OCI-LY7 (cell line): ENCODE measurements at regions of chr6 and their contacts with region 1.

Region 1: DNA sequence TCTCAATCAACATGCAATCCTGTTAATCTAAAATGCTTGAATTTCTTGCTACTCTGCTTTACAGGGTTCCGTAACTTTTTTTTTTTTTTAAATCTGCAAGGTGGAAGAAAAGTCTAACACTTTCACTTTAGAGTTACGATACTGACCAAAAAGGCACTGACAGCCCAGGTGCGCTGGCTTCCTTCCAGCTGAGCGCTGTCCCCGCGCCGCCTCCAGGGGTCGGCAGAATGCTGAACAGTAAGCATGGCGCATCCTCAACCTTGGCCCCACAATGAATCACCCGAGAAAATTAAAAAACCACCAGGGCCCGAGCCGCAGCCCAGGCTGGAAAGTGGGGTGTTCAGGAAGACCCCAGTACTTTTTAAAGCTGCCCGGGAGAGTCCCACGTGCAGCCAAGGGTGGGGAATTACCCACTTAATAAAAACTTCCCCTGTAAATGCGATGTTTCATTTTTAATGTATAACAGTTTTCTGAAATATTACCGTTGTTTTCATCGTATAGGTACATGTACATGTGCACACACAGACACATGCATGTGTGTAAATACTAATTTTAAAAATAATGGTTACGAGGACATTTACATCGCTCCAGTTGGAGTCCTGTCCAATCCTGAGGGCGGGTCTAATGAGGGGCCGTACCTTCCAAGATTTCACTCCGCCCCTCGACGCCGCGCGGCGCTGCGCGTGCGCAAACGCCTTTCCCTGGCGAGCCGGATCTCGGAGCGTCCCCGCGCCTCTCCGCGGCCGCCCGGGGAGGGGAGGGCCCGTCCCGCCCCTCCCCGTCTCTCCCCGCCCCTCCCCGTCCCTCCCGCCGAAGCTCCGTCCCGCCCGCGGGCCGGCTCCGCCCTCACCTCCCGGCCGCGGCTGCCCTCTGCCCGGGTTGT is at the start of gene GINM1:
- DNase-seq: peak; percentile 96
- H3K4me3 ChIP-seq: peak within 1 kb of the TSS; percentile 97
- H3K27ac ChIP-seq: peak within 1 kb of the TSS; percentile 79
- H3K4me1 ChIP-seq: peaks cover 30% of the 10 kb centered on the region
- CTCF ChIP-seq: peak; percentile 94
- total RNA-seq, gene GINM1: 17.2 and 17.6 TPM in 2 replicates

Region 2: DNA sequence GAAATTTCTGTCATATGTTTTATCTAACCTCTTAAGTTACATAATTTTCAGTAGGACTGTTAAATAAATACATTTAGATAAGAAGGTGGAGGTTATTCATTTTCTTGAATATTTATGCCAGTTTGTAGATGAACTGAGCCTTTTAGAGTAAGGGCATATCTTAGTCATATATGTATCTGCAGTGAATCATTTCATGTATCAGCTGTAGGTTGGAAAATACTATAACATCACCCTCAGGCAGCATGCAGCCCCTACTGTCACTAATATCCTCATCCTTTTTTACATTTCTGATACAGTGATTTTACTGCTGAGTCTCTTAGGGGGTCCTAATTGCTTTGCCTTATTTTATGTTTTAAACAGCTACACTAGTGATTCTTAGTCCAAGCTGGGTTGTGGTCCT is 185.2 kb before region 1 on chr6:
- CTCF ChIA-PET with region 1: no interaction called
- POLR2A ChIA-PET with region 1: no interaction called
- intact Hi-C with region 1: no loop called
- DNase-seq: no peak
- H3K4me3 ChIP-seq: no peak overlapping the region
- H3K27ac ChIP-seq: no peak overlapping the region
- H3K4me1 ChIP-seq: no peaks in the 10 kb centered on the region
- CTCF ChIP-seq: no peak

Region 3: DNA sequence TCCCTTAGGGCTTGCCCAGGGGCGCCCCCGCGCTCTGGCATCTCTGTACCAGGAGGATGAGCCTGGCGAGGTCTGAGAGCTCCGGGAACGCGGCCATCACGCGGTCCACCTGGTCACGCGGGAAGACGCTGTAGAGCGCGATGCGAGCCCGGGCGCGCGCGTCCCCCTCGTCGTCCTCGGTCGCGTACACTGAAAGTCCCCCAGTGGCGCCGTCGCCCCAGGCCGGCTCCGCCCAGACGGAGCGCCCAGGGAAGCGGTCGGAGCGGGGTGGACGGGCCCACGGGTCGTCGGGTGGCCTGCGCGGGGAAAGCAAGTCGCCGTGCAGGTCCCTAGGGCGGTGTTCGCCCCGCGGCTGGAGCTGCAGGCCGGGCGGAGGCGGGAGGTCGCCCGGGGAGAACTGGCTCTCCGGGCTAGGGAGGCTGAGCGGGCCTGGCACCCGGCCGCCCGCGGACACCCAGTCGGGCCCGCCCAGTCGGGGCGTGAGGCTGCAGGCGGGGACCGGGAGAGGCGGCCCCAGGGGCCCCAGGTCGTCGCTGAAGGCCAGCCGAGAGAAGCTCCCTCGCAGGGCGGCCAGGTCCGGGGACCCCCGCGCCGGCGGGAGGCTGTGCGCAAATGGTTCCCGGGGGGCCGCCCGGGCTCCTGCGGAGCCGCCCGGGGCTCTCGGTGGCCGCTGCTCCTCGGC is 114.9 kb before region 1 on chr6:
- CTCF ChIA-PET with region 1: no interaction called
- POLR2A ChIA-PET with region 1: no interaction called
- intact Hi-C with region 1: no loop called
- DNase-seq: no peak
- H3K4me3 ChIP-seq: no peak overlapping the region
- H3K27ac ChIP-seq: no peak overlapping the region
- H3K4me1 ChIP-seq: no peaks in the 10 kb centered on the region
- CTCF ChIP-seq: no peak

Region 4: DNA sequence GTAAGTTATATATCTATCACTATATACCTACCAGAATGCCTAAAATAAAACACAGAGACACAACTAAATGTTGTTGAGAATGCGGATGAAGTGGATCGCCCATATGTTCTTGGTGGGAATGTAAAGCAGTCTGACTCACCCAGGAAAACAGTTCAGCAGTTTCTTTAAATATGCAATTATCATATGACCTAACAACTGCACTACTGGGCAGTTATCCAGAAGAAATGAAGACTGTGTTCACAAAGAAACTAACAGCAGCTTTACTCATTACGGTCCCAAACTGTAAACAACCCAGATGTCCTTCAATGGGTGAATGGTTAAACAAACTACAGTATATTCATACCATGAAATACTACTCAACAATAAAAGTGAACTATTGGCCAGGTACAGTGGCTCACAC is 66.7 kb before region 1 on chr6:
- CTCF ChIA-PET with region 1: no interaction called
- POLR2A ChIA-PET with region 1: no interaction called
- intact Hi-C with region 1: no loop called
- DNase-seq: no peak
- H3K4me3 ChIP-seq: no peak overlapping the region
- H3K27ac ChIP-seq: no peak overlapping the region
- H3K4me1 ChIP-seq: peaks cover 6% of the 10 kb centered on the region
- CTCF ChIP-seq: no peak

Region 5: DNA sequence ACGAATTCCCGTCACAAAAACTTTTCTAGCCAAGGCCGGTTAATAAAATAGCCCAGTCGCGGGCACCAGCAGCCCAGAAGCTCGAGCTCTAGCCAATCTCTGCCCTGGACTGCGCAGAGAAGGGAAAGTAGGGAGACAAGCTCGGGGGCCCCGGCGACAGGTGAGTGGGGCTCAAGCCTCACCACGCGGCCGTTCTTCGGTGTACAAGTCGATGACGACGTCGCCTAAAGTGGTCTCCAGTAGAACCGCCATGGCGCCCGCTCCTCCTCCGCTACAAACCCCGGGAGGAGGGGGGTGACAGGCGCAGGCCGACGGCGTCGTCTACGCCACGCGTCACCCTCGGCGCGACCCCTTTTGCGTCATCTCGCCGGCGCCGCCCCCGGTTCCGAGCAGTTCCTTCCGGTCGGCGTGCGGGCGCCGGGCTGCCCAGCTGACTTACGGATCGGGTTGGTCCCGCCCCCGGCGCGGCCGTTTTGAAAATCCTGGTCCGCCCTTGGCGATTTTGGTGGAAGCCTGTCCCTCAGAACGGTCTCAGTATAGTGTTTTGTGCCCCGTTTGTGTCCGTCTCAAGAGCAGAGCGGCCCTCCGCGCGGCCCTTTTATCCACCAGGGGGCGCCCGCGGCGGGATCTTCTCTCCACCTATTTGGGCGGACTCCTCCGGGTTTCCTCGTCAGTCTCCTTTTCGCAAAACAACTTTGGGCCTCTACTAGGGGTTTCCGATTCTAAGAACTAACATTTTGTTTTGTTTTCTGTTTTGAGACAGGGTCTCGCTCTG is 19.8 kb before region 1 on chr6 and contains the start of gene PPIL4:
- CTCF ChIA-PET with region 1: interaction called, 4 read pairs
- POLR2A ChIA-PET with region 1: interaction called, 22 read pairs
- intact Hi-C with region 1: loop called (anchors 1 kb)
- DNase-seq: peak; percentile 96
- H3K4me3 ChIP-seq: peak within 1 kb of the TSS; percentile 92
- H3K27ac ChIP-seq: peak within 1 kb of the TSS; percentile 86
- H3K4me1 ChIP-seq: peaks cover 26% of the 10 kb centered on the region
- CTCF ChIP-seq: peak; percentile 100
- total RNA-seq, gene PPIL4: 21.6 and 29.2 TPM in 2 replicates

Region 6: DNA sequence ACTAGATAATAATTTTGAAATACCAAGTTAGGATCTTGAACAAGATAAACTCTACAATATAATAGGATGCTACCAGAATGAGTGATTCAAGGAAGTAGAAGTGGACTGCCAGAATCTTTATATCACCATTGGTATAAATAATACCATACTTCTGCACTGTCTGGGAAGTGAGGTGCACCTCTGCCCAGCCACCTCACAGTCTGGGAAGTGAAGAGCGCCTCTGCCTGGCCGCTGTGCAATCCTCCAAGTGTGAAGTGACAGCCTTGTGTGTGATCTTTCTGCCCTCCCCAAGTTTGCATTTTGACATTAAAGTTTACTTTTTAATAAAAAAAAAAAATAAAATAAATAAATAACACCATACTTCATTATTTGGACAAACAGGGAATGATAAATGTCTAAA is 133.4 kb after region 1 on chr6:
- CTCF ChIA-PET with region 1: no interaction called
- POLR2A ChIA-PET with region 1: interaction called, 5 read pairs
- intact Hi-C with region 1: loop called (anchors 2 kb)
- DNase-seq: peak; percentile 28
- H3K4me3 ChIP-seq: no peak overlapping the region
- H3K27ac ChIP-seq: no peak overlapping the region
- H3K4me1 ChIP-seq: no peaks in the 10 kb centered on the region
- CTCF ChIP-seq: peak; percentile 66

Region 7: DNA sequence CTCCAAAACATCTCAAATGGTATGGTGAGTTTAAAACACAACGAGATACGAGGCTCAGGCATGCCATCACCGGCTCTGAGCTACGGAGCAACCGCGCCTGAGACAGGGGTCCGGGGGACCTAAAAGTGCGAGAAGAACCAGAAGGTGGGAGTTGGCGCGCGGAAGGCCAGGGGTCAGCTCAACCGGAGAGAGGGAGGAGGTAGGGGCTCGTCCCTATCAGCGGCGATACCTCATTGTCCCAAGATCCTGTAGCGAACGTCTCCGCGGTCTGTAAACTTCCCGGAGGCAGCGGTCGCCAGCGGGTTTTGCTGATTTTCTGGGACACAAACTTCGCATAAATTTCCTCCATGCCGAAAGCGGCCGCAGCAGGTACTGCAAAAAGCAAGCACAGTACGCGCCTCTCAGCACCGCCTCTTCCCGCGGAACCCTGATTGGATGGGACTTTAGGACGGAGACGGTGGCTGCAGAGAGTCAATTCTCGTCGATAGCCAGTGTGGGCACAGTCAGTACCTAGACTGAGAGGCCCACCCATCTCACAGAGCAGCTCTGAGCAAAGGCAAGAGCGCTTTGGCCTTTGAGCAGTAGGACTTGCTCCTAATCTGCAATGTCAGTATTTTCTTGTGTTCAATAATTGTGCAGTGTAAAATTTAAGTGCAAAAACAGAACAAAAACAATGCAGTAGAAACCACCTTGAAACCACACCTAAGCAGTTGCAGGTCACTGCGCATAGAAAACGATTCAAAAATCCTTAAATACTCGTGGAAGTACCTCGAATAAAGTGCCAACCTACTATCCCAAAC is 180.6 kb after region 1 on chr6 and contains the start of gene NUP43:
- CTCF ChIA-PET with region 1: no interaction called
- POLR2A ChIA-PET with region 1: interaction called, 8 read pairs
- intact Hi-C with region 1: loop called (anchors 5 kb)
- DNase-seq: peak; percentile 96
- H3K4me3 ChIP-seq: peak within 1 kb of the TSS; percentile 80
- H3K27ac ChIP-seq: peak within 1 kb of the TSS; percentile 74
- H3K4me1 ChIP-seq: peaks cover 24% of the 10 kb centered on the region
- CTCF ChIP-seq: peak; percentile 67
- total RNA-seq, gene NUP43: 28.6 and 30.7 TPM in 2 replicates

Region 8: DNA sequence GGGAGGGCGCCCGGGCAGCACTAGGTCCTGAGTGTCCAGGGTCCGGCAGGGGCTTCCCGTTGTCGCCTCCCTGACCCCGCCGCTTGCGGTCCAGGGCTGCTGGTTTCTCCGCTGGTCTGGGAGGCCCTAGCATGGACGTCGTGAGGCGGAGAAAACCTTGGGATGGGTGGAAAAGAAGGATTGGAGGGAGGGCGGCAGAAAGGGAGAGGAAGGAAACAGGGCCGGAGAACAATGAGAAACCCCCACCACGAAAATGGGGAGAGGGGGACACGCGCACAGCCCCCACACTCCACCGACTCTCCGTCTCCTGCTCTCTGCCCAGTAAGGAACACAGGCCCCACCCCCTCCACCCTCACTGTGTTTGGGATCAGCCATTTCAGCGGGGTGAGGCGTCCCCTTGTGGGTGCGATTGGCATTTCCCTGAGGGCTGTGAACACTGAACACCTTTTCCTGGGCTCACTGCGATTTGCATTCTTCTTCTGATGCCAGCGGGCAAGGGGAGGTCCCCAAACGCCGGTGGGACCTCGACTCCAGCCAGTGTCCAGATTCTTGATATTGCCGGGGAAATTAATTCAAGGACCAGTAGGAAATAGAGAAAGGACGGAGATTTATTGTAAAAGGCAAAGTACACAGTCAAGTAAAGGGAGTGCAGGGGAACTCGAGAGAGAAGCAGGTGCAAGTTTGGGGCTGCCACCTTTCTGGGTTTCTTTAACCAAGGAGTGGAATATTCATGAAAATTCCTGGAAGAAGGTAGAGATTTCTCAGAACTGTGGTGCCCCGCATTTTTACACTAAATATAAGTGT is 360.4 kb after region 1 on chr6:
- CTCF ChIA-PET with region 1: no interaction called
- POLR2A ChIA-PET with region 1: no interaction called
- intact Hi-C with region 1: loop called (anchors 10 kb)
- DNase-seq: peak; percentile 75
- H3K4me3 ChIP-seq: peak overlapping the region; percentile 22
- H3K27ac ChIP-seq: no peak overlapping the region
- H3K4me1 ChIP-seq: peaks cover 11% of the 10 kb centered on the region
- CTCF ChIP-seq: peak; percentile 83

Region 9: DNA sequence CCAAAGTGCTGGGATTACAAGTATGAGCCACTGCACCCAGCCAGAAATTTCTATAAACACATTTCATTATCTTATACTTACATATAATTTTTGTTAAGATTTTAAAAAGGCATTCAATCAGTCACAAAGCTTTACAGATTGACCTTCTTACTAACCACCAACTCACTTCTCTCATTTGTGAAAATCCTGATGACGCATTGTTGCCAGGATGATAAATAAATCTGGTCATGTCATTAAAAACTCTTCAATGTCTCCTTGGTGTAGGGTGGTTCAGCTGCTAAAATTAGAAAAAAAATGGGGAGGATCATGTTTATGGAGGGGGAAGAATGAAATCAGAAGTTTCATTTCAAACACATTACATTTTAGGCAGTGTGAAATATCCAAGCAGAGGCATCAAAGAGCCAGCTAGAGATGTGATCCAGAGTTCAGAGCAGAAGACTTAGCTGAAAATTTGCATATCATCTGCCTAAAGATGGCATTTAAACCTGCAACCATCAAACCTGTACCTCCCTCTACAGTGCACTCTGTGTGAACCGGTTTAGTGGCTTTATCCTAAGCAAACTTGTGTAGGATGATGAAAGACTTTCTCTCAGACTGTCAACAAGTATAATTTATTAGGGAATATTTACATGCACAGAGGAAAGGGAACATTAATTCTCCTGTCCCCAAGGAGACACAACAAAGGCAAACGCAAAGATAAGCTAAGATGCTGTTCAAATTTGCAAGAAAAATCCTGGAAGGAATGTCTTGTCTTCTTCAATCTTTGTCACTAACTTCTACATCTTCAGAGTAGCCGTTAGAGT is 949.0 kb after region 1 on chr6:
- CTCF ChIA-PET with region 1: no interaction called
- POLR2A ChIA-PET with region 1: no interaction called
- intact Hi-C with region 1: no loop called
- DNase-seq: no peak
- H3K4me3 ChIP-seq: no peak overlapping the region
- H3K27ac ChIP-seq: no peak overlapping the region
- H3K4me1 ChIP-seq: no peaks in the 10 kb centered on the region
- CTCF ChIP-seq: no peak